Vagina (tissue), 2 donors: ENCODE measurements at regions of chr15 and their contacts with region 1.

Region 1: GRCh38 chr15:32870240-32871033 is 152.6 kb downstream of the GREM1 start:
- DNase-seq: no peak
- H3K4me3 ChIP-seq: no peak overlapping the region
- H3K27ac ChIP-seq: no peak overlapping the region
- H3K4me1 ChIP-seq: peaks cover 12% of the 10 kb centered on the region
- H3K27me3 ChIP-seq: no peaks in the 10 kb centered on the region
- CTCF ChIP-seq: no peak
- POLR2A ChIP-seq: no peak

Region 2: GRCh38 chr15:32956006-32956405 is 85.6 kb after region 1 on chr15:
- intact Hi-C with region 1: loop called (anchors 10 kb)
- DNase-seq: no peak
- H3K4me3 ChIP-seq: no peak overlapping the region
- H3K27ac ChIP-seq: no peak overlapping the region
- H3K4me1 ChIP-seq: no peaks in the 10 kb centered on the region
- H3K27me3 ChIP-seq: no peaks in the 10 kb centered on the region
- CTCF ChIP-seq: peak in 2 of 3 experiments; percentile 14 to 21
- POLR2A ChIP-seq: no peak

Region 3: DNA sequence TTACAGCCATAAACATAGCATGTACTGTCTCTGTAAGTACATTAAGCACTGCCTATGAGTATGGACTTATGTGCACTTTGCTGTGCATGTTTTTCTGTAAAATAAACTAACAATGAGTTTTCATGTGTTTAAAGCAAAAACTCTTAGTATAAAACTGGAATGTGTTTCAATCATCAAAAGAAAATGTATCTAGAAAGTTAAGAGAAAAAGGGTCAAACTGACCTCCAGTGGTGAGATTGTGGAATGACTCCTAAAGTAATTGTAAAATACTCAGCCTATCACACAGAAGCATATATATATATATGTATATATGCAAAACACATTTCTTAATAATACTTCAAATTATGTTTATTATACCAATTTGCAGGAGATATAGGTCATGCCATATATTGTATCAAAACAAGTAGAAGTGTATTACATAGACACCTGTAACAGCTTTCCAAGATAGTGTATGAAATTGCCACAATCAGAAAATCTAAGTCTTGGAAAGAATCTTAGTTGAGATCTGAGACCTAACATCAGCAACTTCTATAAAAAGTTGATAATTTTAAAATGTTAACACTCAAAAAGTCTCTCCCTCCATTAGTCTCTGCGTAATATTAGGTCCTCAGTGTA is 124.5 kb after region 1 on chr15:
- intact Hi-C with region 1: loop called (anchors 10 kb)
- DNase-seq: no peak
- H3K4me3 ChIP-seq: no peak overlapping the region
- H3K27ac ChIP-seq: no peak overlapping the region
- H3K4me1 ChIP-seq: peaks cover 7% of the 10 kb centered on the region
- H3K27me3 ChIP-seq: no peaks in the 10 kb centered on the region
- CTCF ChIP-seq: peak in 2 of 3 experiments; percentile 41 to 69
- POLR2A ChIP-seq: no peak

Region 4: DNA sequence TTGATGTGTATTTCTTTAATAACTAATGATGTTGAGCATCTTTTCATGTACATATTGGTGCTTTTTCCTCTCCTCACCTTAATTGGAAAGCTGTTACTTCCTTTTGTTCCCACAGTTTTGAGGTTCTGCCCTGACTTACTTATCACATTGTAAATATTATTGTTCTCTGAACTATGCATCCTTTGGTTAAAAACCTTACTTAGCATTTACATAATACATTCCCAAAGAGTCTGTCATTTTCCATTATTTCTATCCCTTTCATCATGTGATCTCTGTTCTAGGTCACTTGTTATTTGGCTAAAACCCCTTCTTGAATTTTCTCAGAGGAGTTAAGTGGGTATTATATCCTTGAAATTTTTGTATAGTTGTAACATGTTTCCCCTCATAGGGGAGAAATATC is 1434.2 kb after region 1 on chr15:
- intact Hi-C with region 1: no loop called
- DNase-seq: no peak
- H3K4me3 ChIP-seq: no peak overlapping the region
- H3K27ac ChIP-seq: no peak overlapping the region
- H3K4me1 ChIP-seq: no peaks in the 10 kb centered on the region
- H3K27me3 ChIP-seq: no peaks in the 10 kb centered on the region
- CTCF ChIP-seq: no peak
- POLR2A ChIP-seq: no peak